ENCODE measurements at regions of chr11 and their contacts with region 1.

Region 1: DNA sequence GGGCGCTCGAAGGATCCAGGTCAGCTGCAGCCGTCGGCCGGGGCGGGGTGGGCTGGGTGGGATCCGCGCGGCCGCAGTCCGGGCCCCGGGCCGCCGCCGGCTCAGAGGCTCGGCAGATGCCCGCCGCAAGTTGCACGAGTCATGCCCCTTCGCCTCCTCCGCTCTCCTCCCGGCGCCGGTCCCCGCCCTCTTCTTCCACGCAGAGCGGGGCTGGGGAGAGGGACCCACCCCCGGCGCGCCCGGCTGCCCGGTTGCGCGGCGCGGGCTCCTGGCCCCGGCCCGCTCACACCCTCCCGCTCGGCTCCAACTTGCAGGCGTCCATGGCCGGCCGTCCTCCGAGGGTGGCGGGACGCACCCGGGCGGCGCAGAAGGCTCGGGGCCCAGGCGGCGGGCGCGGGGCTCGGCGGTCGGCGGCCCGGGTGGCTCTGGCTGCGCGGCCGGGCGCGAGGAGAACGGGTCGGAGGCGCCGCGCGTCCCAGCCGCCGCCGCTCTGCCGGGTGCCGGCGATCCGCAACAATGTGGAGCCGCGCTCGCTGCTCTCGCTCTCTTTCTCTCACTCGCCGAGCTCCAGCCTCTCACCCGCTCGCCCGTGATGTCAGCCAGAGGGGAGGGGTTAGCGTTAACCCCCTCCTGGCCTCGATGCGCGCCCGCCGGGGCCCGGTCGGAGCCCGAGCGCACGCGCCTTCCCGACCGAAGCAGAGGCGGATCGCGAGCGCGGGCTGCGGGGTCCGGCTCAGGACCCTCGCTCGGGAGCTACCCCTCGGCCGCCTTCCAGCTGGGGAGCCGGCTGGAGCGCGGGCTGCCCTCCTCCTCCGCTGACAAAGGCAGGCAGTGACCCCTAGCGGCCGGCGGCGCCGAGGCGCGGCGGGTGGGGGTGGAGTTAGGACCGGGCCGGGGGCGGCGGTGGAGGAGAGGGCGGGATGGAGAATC is at the start of gene NECTIN1:
- DNase-seq: peak; percentile 78
- H3K4me3 Mint-ChIP-seq: peak within 1 kb of the TSS; percentile 88
- H3K27ac Mint-ChIP-seq: peak within 1 kb of the TSS; percentile 79
- H3K4me1 Mint-ChIP-seq: no peaks in the 10 kb centered on the region
- H3K27me3 Mint-ChIP-seq: peaks cover 60% of the 10 kb centered on the region
- total RNA-seq, gene NECTIN1: 4.5 and 5.4 TPM in 2 replicates

Region 2: GRCh38 chr11:119363851-119364590 is 364.9 kb before region 1 on chr11:
- intact Hi-C with region 1: loop called (anchors 10 kb)
- DNase-seq: peak; percentile 58
- H3K4me3 Mint-ChIP-seq: no peak overlapping the region
- H3K27ac Mint-ChIP-seq: no peak overlapping the region
- H3K4me1 Mint-ChIP-seq: peaks cover 20% of the 10 kb centered on the region
- H3K27me3 Mint-ChIP-seq: peaks cover 53% of the 10 kb centered on the region

Region 3: GRCh38 chr11:119381181-119381988 is 347.5 kb before region 1 on chr11 and contains the start of gene USP2:
- intact Hi-C with region 1: loop called (anchors 5 kb)
- DNase-seq: peak; percentile 95
- H3K4me3 Mint-ChIP-seq: no peak within 1 kb of the TSS
- H3K27ac Mint-ChIP-seq: no peak within 1 kb of the TSS
- H3K4me1 Mint-ChIP-seq: no peaks in the 10 kb centered on the region
- H3K27me3 Mint-ChIP-seq: peaks cover 8% of the 10 kb centered on the region
- total RNA-seq, gene USP2: 0.22 and 0.36 TPM in 2 replicates

Region 4: DNA sequence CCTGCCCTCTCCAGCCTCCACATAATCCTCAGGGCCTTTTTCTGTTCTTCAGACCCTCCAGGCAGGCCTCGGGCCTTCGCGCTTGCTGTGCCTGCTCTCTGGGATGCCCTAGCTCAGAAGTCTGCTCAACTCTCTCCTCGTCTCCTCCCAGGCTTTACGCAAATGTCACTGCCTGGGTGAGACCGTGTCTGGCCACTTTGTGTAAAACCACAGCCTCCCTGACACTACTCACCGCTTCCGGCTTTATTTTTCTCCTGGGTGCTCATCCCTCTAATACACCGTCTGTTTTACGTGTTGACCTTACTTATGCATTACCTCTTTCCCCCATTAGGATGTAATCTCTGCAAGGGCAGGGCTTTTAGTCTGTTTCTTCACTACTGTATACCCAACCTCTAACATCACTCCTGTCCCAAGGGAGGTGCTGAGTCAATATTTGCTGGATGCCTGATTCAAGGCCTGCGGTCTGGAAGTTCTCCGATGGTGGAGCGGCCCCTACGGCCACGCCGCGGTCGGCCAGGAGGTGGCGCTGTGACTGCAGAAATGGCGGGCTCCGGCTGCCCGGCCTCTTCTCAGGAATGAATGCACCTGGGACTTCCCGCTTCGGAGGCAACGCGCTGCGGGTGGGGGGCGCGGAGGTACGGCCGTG is 247.8 kb before region 1 on chr11:
- intact Hi-C with region 1: loop called (anchors 2 kb)
- DNase-seq: peak; percentile 55
- H3K4me3 Mint-ChIP-seq: no peak overlapping the region
- H3K27ac Mint-ChIP-seq: no peak overlapping the region
- H3K4me1 Mint-ChIP-seq: no peaks in the 10 kb centered on the region
- H3K27me3 Mint-ChIP-seq: peaks cover 6% of the 10 kb centered on the region

Region 5: DNA sequence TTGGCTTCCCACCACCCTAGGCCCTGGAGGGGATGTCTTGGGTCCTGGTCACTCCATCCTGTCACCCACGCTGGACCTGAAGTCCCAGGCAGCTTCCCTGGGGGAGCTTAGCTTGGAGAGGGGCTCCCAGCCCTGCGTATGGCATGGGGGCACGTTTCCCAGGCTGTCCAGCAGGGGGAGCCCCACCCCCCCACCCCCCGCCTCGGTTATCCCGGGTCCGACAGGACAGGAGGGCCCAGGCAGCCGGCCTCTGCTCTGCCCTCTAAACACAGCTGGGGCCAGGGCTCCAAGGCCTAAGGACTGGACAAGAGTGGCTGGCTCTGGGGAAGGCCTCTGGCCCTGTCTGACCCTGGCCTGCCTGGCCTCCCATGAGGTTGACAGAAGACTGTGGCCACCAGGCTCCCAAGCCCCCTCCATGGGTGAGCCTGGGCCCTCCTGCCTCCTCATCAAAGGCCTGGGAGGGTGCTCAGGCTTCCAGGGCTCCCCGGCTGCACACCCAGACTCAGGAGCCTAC is 104.8 kb before region 1 on chr11:
- intact Hi-C with region 1: loop called (anchors 5 kb)
- DNase-seq: no peak
- H3K4me3 Mint-ChIP-seq: no peak overlapping the region
- H3K27ac Mint-ChIP-seq: no peak overlapping the region
- H3K4me1 Mint-ChIP-seq: no peaks in the 10 kb centered on the region
- H3K27me3 Mint-ChIP-seq: peaks cover 5% of the 10 kb centered on the region

Region 6: GRCh38 chr11:119641983-119642745 is 86.8 kb before region 1 on chr11:
- intact Hi-C with region 1: loop called (anchors 2 kb)
- DNase-seq: no peak
- H3K4me3 Mint-ChIP-seq: no peak overlapping the region
- H3K27ac Mint-ChIP-seq: no peak overlapping the region
- H3K4me1 Mint-ChIP-seq: no peaks in the 10 kb centered on the region
- H3K27me3 Mint-ChIP-seq: no peaks in the 10 kb centered on the region

Region 7: GRCh38 chr11:119666463-119667131 is 62.3 kb before region 1 on chr11:
- intact Hi-C with region 1: loop called (anchors 1 kb)
- DNase-seq: peak; percentile 38
- H3K4me3 Mint-ChIP-seq: no peak overlapping the region
- H3K27ac Mint-ChIP-seq: no peak overlapping the region
- H3K4me1 Mint-ChIP-seq: no peaks in the 10 kb centered on the region
- H3K27me3 Mint-ChIP-seq: no peaks in the 10 kb centered on the region